PC-9 (cell line): ENCODE measurements at regions of chr10 and their contacts with region 1.

Region 1: GRCh38 chr10:14748470-14748869 is 26.2 kb downstream of the FAM107B start:
- DNase-seq: peak; percentile 92 to 93
- H3K4me3 ChIP-seq: no peak overlapping the region
- H3K27ac ChIP-seq: peak overlapping the region; percentile 80
- H3K4me1 ChIP-seq: peaks cover 27% of the 10 kb centered on the region
- H3K27me3 ChIP-seq: no peaks in the 10 kb centered on the region
- CTCF ChIP-seq: no peak

Region 2: GRCh38 chr10:14635043-14635710 is 113.3 kb before region 1 on chr10:
- CTCF ChIA-PET with region 1: no interaction called
- POLR2A ChIA-PET with region 1: no interaction called
- intact Hi-C with region 1: no loop called
- DNase-seq: no peak
- H3K4me3 ChIP-seq: no peak overlapping the region
- H3K27ac ChIP-seq: no peak overlapping the region
- H3K4me1 ChIP-seq: no peaks in the 10 kb centered on the region
- H3K27me3 ChIP-seq: no peaks in the 10 kb centered on the region
- CTCF ChIP-seq: no peak

Region 3: DNA sequence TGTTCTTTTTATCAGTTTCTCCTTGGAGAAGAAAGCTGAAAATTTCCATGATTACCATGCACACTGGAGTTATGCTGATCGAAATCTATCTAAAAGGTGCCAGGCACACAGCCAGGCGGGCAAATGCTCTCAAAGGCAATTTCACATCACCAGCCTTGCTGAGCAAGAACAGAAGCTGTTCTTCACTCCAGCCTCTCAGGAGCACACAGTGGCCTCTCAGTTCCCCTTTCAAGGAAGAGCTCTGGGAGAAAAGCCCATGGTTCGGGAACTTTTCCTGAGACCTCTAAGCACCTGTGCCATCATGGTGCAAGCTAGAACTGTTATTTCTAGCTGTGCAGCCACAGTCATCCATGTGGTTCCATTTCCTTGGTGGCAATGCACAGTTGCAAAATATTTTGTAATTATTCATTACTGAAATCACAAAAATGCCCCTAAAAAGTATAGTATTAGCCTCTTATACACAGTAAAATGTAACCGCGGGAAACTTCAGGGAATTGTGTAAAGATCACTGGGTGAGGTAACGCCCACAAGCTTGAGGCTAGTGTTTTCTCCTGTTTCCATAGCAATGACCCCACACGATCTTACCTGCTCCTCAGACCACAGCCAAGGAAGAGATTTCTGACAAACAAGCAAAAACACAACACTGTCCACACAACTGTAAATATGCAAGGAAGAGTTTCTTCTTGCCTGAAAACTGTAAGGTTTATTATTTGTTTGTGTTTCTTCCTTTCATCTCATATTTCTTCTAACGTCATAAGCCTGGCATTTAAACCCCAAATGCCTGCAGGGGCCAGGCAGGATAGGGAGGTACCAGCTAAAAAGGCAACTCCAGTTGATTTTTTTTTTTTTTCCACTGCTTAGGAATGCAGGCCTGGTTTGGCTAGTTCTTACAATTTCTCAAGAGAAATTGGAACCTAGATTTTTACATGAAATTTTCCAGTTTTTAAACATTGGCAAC is 94.9 kb before region 1 on chr10:
- CTCF ChIA-PET with region 1: no interaction called
- POLR2A ChIA-PET with region 1: interaction called, 5 read pairs
- intact Hi-C with region 1: loop called (anchors 1 kb)
- DNase-seq: peak; percentile 80 to 96
- H3K4me3 ChIP-seq: peak overlapping the region; percentile 51
- H3K27ac ChIP-seq: peak overlapping the region; percentile 92
- H3K4me1 ChIP-seq: peaks cover 73% of the 10 kb centered on the region
- H3K27me3 ChIP-seq: no peaks in the 10 kb centered on the region
- CTCF ChIP-seq: no peak